Sciatic nerve (tissue), 2 donors: ENCODE measurements at regions of chr2 and their contacts with region 1.

Region 1: DNA sequence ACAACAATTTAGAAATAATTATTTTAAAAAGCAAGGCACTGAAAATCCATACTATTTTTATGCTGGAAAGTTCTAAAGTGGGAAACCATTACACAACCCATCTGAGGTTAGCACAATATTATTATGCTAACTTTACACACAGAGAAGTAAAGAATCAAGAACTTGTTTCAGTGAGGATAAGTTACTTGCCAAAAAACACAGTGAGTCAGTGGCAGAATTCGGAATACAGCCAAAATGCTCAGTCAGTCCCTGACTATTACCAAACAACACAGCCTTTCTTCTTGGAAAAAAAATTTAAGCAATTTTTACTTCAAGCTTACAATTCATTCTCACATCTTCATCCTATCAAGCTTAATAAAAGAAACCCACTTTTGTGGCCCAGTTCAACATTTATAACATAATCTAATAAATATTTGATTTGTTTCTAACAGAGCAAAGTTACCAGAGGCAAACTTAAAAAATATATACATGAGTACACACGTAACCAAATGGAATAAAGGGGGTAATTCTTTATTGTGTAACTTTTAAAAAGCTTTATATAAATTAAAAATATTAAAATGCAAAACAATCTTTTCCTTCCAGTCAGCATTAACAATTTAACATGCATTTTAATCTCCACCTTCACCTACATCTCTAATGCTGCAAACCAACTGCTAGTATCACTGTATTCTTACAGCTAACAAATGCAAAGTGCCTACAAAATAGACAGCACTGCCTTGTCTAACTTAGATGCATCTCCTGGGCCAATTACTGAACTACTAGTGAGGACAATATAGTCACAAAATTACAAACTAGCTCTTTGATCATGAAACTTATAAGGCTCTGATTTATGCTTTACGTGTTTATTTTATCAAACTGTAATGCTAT is 55.2 kb downstream of the CCDC88A start:
- DNase-seq: no peak
- ATAC-seq: peak; percentile 99

Region 2: GRCh38 chr2:55247025-55247424 is 117.4 kb before region 1 on chr2:
- intact Hi-C with region 1: no loop called
- DNase-seq: no peak
- ATAC-seq: no peak

Region 3: GRCh38 chr2:55419679-55420438 is 55.4 kb after region 1 on chr2 and contains the start of gene CCDC88A:
- intact Hi-C with region 1: loop called (anchors 10 kb)
- DNase-seq: peak; percentile 98
- ATAC-seq: peak; percentile 98
- total RNA-seq, gene CCDC88A: 59.8 TPM